Heart right ventricle (tissue), 16 donors: ENCODE measurements at regions of chr18 and their contacts with region 1.

Region 1: DNA sequence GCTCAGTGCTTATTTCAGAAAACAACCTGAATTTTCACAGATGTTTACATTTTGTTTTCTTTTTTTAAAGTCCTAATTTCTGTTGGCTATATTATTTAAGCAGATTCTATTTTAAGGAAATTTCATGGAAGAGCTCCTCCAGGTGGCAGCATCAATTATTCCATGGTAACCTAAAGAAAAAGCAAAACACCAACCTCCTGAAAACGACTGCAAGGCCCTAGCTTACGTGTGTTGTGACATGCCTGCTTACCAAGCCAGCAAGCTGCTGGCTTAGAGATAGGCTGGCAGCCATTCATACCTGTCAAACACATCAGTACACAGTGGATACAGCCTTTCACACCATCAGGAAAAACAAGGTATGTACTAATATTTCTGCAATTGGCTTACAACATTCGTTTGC is 64.9 kb downstream of the LPIN2 start:
- DNase-seq: no peak
- ATAC-seq: peak in 7 of 8 donors; percentile 33 to 95 (median 81)
- H3K4me3 ChIP-seq: no peak overlapping the region
- H3K27ac ChIP-seq: peak overlapping the region in 2 of 10 donors; percentile 5 to 12
- H3K4me1 ChIP-seq: peaks cover 0 to 8% (median 3%) of the 10 kb centered on the region in 9 donors
- H3K27me3 ChIP-seq: no peaks in the 10 kb centered on the region
- CTCF ChIP-seq: peak in 6 of 9 donors; percentile 27 to 50 (median 42)

Region 2: DNA sequence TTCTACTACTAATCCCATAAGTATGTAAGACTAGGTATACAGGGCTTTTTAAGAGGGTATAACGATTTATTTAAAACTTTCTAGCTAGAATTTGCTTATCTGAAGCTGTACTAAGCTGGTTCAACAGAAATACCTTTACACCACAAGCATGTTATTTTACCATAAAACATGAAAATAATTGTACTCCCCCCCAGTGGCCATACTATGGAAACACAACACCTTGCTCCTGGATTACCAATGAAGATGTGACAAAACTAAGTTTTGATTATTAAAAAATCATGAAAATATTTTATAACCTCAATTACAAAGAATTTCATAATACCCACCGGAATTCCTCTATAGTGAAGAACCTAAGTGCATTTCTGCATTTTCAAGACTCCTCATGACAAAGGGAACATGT is 37.6 kb after region 1 on chr18:
- intact Hi-C with region 1: loop called in 1 of 10 experiments (anchors 5 kb)
- DNase-seq: no peak
- ATAC-seq: no peak
- H3K4me3 ChIP-seq: no peak overlapping the region
- H3K27ac ChIP-seq: peak overlapping the region in 1 of 10 donors; percentile 3
- H3K4me1 ChIP-seq: peaks cover 0 to 63% (median 27%) of the 10 kb centered on the region in 9 donors
- H3K27me3 ChIP-seq: no peaks in the 10 kb centered on the region
- CTCF ChIP-seq: peak; percentile 20 to 64 (median 47)

Region 3: GRCh38 chr18:3129053-3129864 is 181.2 kb after region 1 on chr18:
- intact Hi-C with region 1: loop called in 1 of 10 experiments (anchors 5 kb)
- DNase-seq: peak; percentile 78 to 82
- ATAC-seq: peak; percentile 76 to 93 (median 85)
- H3K4me3 ChIP-seq: no peak overlapping the region
- H3K27ac ChIP-seq: peak overlapping the region in 1 of 10 donors; percentile 2
- H3K4me1 ChIP-seq: peaks cover 0 to 17% (median 7%) of the 10 kb centered on the region in 9 donors
- H3K27me3 ChIP-seq: no peaks in the 10 kb centered on the region
- CTCF ChIP-seq: peak; percentile 57 to 91 (median 82)